AG04449 (cell line): ENCODE measurements at regions of chr6 and their contacts with region 1.

Region 1: GRCh38 chr6:134938896-134939295 is 11.0 kb downstream of the ALDH8A1 start:
- DNase-seq: no peak
- H3K4me3 ChIP-seq: no peak overlapping the region
- CTCF ChIP-seq: no peak

Region 2: DNA sequence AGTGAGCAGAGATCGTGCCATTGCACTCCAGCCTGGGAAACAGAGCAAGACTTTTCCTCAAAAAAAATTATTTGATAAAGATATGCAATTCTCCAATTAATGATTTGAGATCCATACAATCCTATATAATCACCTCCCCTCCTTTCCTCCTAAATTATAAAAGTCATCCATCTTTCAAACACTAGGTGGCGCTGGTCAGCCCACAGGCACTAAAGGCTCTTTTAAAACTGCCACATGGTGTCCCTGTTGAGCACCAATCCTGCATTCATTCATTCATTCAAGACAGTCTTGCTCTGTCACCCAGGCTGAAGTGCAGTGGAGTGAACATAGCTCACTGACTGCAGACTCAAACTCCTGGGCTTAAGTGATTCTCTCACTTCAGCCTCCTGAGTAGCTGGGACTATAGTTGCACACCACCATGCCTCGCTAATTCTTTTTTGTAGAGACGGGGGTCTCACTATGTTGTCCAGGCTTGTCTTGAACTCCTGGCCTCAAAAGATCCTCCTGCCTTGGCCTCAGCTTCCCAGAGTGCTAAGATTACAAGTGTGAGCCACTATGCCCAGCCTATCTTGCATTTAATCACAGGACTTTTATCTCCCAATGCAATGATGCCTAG is 827.7 kb before region 1 on chr6:
- CTCF ChIA-PET with region 1: interaction called, 63 read pairs
- POLR2A ChIA-PET with region 1: no interaction called
- DNase-seq: no peak
- H3K4me3 ChIP-seq: no peak overlapping the region
- CTCF ChIP-seq: peak; percentile 69

Region 3: GRCh38 chr6:134152767-134153485 is 786.0 kb before region 1 on chr6:
- CTCF ChIA-PET with region 1: interaction called, 150 read pairs
- POLR2A ChIA-PET with region 1: no interaction called
- DNase-seq: no peak
- H3K4me3 ChIP-seq: no peak overlapping the region
- CTCF ChIP-seq: no peak

Region 4: GRCh38 chr6:134174672-134175198 is 764.2 kb before region 1 on chr6:
- CTCF ChIA-PET with region 1: interaction called, 13 read pairs
- POLR2A ChIA-PET with region 1: interaction called, 4 read pairs
- DNase-seq: no peak
- H3K4me3 ChIP-seq: peak overlapping the region; percentile 90
- CTCF ChIP-seq: no peak

Region 5: DNA sequence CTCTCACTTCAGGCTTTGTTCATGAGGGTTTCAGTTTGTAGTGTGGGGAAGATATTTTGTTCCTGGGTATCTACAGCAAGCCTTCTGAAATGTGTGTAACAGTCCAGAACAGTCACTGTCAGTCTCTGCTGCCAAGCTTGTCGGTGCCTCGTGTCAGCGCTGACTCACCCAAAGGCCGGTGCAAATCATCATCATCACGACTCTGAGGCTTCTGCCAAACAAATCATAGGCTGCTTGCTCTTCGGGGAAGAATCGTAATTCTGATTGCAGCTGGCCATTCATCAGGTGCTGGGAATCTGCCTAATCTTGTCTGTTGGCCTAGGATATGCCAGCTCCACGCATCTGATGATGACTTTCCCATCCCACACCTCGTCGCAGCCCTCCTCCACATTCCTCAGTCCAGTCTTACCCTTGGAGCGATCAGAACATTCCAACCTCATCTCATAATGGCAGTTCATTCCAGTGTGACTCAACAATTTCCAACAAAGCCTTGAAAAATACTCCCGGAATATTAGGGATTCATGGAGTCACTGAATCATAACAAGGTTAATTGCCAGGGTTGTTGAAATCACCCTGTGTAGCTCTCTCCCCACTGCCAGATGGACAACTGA is 29.9 kb before region 1 on chr6:
- CTCF ChIA-PET with region 1: interaction called, 14 read pairs
- POLR2A ChIA-PET with region 1: interaction called, 4 read pairs
- DNase-seq: peak; percentile 100
- H3K4me3 ChIP-seq: peak overlapping the region; percentile 35
- CTCF ChIP-seq: no peak

Region 6: DNA sequence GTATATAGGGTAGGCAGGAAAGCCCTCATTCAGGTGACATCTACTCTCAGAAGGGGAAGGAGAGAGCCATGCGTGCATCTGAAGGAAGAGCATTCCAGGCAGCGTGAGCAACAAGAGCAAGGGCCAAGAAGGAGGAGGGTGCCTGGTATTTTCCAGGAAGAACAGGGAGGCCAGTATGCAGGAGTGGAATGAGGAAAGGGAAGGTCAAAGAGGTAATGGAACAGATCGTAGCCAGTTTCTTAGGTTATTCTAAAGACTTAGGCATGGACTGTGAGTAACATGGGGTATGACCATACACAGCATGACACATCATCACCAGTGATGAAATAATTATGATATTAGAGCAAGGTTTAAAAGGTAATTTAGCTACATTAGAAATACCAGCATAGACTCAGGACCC is 13.1 kb before region 1 on chr6:
- CTCF ChIA-PET with region 1: interaction called, 27 read pairs
- POLR2A ChIA-PET with region 1: no interaction called
- DNase-seq: no peak
- H3K4me3 ChIP-seq: no peak overlapping the region
- CTCF ChIP-seq: no peak

Region 7: DNA sequence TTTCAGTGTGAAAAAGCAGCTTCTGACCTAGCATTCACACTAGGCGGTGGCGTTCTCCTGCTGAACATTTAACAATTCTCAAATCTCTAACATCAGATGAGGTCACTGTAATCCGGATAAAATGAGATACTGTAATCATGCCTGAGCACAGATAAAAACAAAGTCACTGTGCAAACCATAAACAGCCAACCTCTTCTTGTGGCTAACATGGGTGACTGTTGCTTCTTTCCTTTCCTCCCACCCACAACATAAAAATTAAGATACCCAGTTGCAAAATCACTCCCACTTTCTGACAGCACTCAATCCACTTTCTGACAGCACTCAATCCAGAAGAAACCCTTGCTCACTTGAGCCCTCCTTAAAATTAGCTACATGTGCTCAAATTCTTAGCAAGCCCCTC is 22.5 kb after region 1 on chr6:
- CTCF ChIA-PET with region 1: interaction called, 13 read pairs
- POLR2A ChIA-PET with region 1: no interaction called
- DNase-seq: no peak
- H3K4me3 ChIP-seq: no peak overlapping the region
- CTCF ChIP-seq: no peak

Region 8: DNA sequence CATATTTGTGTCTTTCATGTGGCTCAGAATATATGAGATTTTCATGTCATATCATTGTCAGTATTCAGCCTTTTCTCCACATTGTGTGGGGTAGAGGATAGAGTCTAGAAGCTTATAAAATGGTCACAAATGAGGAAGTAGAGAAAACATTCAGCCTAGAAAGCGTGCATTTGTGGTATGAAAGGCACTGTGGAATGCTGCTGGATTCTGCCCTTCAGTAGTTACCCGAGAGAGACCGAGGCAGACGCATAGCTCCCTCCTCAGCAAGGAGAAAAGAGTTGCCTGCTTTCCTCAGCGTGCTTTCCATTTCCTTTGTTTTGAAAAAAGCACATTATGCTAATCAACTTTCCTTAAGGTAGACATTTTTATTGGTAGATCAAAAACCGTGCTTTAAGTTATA is 270.9 kb after region 1 on chr6:
- CTCF ChIA-PET with region 1: no interaction called
- POLR2A ChIA-PET with region 1: no interaction called
- DNase-seq: no peak
- H3K4me3 ChIP-seq: no peak overlapping the region
- CTCF ChIP-seq: no peak